ENCODE measurements at regions of chr10 and their contacts with region 1.

Region 1: GRCh38 chr10:103712570-103713498 is 142.5 kb downstream of the SH3PXD2A start:
- DNase-seq: peak; percentile 82 to 92
- ATAC-seq: peak; percentile 90
- H3K4me3 ChIP-seq: no peak overlapping the region
- H3K27ac ChIP-seq: no peak overlapping the region
- H3K4me1 ChIP-seq: no peaks in the 10 kb centered on the region
- H3K27me3 ChIP-seq: no peaks in the 10 kb centered on the region

Region 2: GRCh38 chr10:103776878-103777591 is 64.2 kb after region 1 on chr10:
- intact Hi-C with region 1: loop called in 1 of 2 experiments (anchors 5 kb)
- DNase-seq: peak; percentile 88 to 90
- ATAC-seq: peak; percentile 86
- H3K4me3 ChIP-seq: no peak overlapping the region
- H3K27ac ChIP-seq: no peak overlapping the region
- H3K4me1 ChIP-seq: no peaks in the 10 kb centered on the region
- H3K27me3 ChIP-seq: no peaks in the 10 kb centered on the region

Region 3: GRCh38 chr10:103859161-103860086 is 146.6 kb after region 1 on chr10:
- intact Hi-C with region 1: loop called (anchors 1 kb)
- DNase-seq: no peak
- ATAC-seq: peak; percentile 78
- H3K4me3 ChIP-seq: no peak overlapping the region
- H3K27ac ChIP-seq: no peak overlapping the region
- H3K4me1 ChIP-seq: no peaks in the 10 kb centered on the region
- H3K27me3 ChIP-seq: no peaks in the 10 kb centered on the region

Measured in aorta (tissue), 5 donors.